ENCODE measurements at regions of chr13 and their contacts with region 1.

Region 1: GRCh38 chr13:51590971-51591627 is 6.8 kb downstream of the WDFY2 start:
- DNase-seq: peak; percentile 44
- H3K4me3 ChIP-seq: no peak overlapping the region
- H3K27ac ChIP-seq: no peak overlapping the region
- H3K4me1 ChIP-seq: peaks cover 19% of the 10 kb centered on the region
- H3K27me3 ChIP-seq: no peaks in the 10 kb centered on the region
- CTCF ChIP-seq: no peak
- POLR2A ChIP-seq: no peak

Region 2: GRCh38 chr13:51605698-51606097 is 14.6 kb after region 1 on chr13:
- CTCF ChIA-PET with region 1: no interaction called
- POLR2A ChIA-PET with region 1: no interaction called
- dilution Hi-C with region 1: no loop called
- intact Hi-C with region 1: no loop called
- DNase-seq: no peak
- H3K4me3 ChIP-seq: no peak overlapping the region
- H3K27ac ChIP-seq: no peak overlapping the region
- H3K4me1 ChIP-seq: peaks cover 2% of the 10 kb centered on the region
- H3K27me3 ChIP-seq: no peaks in the 10 kb centered on the region
- CTCF ChIP-seq: no peak
- POLR2A ChIP-seq: no peak

Region 3: GRCh38 chr13:51781246-51782022 is 190.3 kb after region 1 on chr13:
- CTCF ChIA-PET with region 1: interaction called, 10 read pairs
- POLR2A ChIA-PET with region 1: no interaction called
- dilution Hi-C with region 1: no loop called
- intact Hi-C with region 1: no loop called
- DNase-seq: peak; percentile 39
- H3K4me3 ChIP-seq: no peak overlapping the region
- H3K27ac ChIP-seq: no peak overlapping the region
- H3K4me1 ChIP-seq: no peaks in the 10 kb centered on the region
- H3K27me3 ChIP-seq: no peaks in the 10 kb centered on the region
- CTCF ChIP-seq: peak; percentile 14 to 36
- POLR2A ChIP-seq: no peak

Region 4: DNA sequence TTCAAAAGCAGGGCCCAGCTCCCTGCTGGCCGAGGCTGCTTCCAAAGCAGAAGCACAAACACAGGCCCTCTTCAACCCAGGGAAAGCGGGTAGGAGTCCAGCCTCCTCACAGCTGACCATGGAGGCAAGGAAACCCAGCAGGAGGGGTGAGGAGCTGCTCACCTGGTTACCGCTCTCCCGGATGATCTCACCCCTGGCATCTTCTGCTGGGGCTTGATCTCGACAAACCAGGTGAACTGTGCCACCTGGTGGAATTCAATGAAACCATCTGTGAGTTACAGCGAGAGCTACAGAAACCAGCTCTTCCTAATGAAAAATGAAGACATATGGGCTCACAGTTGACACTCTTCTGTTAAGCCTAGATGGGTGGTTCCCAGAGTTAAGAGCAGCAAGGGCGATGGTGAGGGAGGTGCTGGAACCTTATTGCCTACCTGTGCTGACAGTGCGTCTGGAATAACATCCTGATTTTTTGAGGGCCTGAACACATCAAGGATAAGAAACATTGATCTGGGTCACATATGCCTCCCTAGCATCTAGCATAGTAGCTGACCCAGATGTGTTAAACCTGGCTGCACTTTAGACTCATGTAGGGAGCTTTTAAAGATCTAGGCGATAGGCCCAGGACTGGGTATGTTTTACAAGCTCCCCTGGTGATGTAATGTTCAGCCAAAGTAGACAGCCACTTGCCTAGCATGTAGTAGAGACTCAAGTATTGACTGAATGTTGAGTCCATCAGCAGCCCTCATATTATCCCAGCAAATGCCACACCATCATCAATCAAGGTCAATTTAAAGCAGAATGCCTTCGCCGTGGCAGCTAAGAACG is 206.8 kb after region 1 on chr13:
- CTCF ChIA-PET with region 1: interaction called, 17 read pairs
- POLR2A ChIA-PET with region 1: interaction called, 3 read pairs
- dilution Hi-C with region 1: no loop called
- intact Hi-C with region 1: no loop called
- DNase-seq: peak; percentile 36
- H3K4me3 ChIP-seq: no peak overlapping the region
- H3K27ac ChIP-seq: no peak overlapping the region
- H3K4me1 ChIP-seq: peaks cover 24% of the 10 kb centered on the region
- H3K27me3 ChIP-seq: no peaks in the 10 kb centered on the region
- CTCF ChIP-seq: peak; percentile 16 to 27
- POLR2A ChIP-seq: no peak